CD4-positive, alpha-beta T cell (primary cell): ENCODE measurements at regions of chr13 and their contacts with region 1.

Region 1: DNA sequence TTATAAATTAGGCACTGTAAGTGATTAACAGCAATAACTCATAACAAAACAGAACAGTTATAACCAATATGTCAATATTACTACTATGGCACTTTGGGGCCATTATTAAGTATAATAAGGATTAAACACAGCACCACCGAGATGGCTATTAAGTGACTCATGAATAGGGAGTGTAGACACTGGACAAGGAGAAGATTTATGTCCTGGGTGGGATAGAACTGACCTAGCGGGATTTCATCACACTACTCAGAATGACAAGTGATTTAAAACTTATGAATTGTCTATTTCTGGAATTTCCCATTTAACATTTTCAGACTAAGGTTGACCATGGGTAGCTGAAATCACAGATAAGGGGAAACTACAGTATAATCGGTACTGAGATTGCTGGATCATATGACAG is 79.0 kb upstream of the SLC7A1 start:
- DNase-seq: no peak
- ATAC-seq: no peak
- H3K4me3 ChIP-seq: no peak overlapping the region
- H3K4me3 Mint-ChIP-seq: no peak overlapping the region
- H3K27ac ChIP-seq: no peak overlapping the region
- H3K27ac Mint-ChIP-seq: no peak overlapping the region
- H3K4me1 ChIP-seq: no peaks in the 10 kb centered on the region
- H3K4me1 Mint-ChIP-seq: no peaks in the 10 kb centered on the region
- H3K27me3 ChIP-seq: peaks cover 0 to 2% of the 10 kb centered on the region in 2 experiments
- H3K27me3 Mint-ChIP-seq: peaks cover 13% of the 10 kb centered on the region
- CTCF ChIP-seq: no peak

Region 2: GRCh38 chr13:28983641-28984040 is 690.9 kb before region 1 on chr13:
- CTCF ChIA-PET with region 1: no interaction called
- POLR2A ChIA-PET with region 1: no interaction called
- intact Hi-C with region 1: no loop called
- DNase-seq: no peak
- ATAC-seq: no peak
- H3K4me3 ChIP-seq: no peak overlapping the region
- H3K4me3 Mint-ChIP-seq: no peak overlapping the region
- H3K27ac ChIP-seq: no peak overlapping the region
- H3K27ac Mint-ChIP-seq: no peak overlapping the region
- H3K4me1 ChIP-seq: no peaks in the 10 kb centered on the region
- H3K4me1 Mint-ChIP-seq: no peaks in the 10 kb centered on the region
- H3K27me3 ChIP-seq: no peaks in the 10 kb centered on the region
- H3K27me3 Mint-ChIP-seq: no peaks in the 10 kb centered on the region
- CTCF ChIP-seq: no peak

Region 3: GRCh38 chr13:29465741-29466293 is 208.7 kb before region 1 on chr13:
- CTCF ChIA-PET with region 1: no interaction called
- POLR2A ChIA-PET with region 1: no interaction called
- intact Hi-C with region 1: loop called in 1 of 2 experiments (anchors 5 kb)
- DNase-seq: no peak
- ATAC-seq: no peak
- H3K4me3 ChIP-seq: no peak overlapping the region
- H3K4me3 Mint-ChIP-seq: no peak overlapping the region
- H3K27ac ChIP-seq: no peak overlapping the region
- H3K27ac Mint-ChIP-seq: no peak overlapping the region
- H3K4me1 ChIP-seq: no peaks in the 10 kb centered on the region
- H3K4me1 Mint-ChIP-seq: no peaks in the 10 kb centered on the region
- H3K27me3 ChIP-seq: peaks cover 0 to 1% of the 10 kb centered on the region in 2 experiments
- H3K27me3 Mint-ChIP-seq: peaks cover 3% of the 10 kb centered on the region
- CTCF ChIP-seq: no peak